ENCODE measurements at regions of chr1 and their contacts with region 1.

Region 1: GRCh38 chr1:241611063-241611462 is 29.1 kb downstream of the CHML start:
- DNase-seq: peak in 1 of 3 donors; percentile 29
- ATAC-seq: peak; percentile 69
- H3K4me3 ChIP-seq: no peak overlapping the region
- H3K4me1 ChIP-seq: peaks cover 22% of the 10 kb centered on the region
- CTCF ChIP-seq: no peak

Region 2: DNA sequence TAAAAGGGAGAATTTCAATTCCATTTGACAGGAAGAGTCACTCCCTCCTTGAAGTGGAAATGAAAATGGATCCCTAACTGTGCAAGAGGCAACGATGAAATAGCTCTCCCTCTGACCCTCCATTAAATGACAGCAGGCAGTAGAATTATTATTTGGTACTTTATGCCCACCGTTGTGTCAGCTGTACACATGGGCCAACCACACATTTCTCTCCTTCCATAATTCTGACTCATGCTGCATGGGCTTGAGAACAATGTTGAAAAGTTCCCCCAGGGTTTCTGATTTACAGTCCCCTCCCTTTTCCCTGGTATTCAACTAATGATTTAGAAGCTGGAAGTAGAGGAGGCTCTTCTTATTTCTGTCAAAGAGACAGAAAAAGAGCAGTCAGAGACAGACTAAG is 357.6 kb before region 1 on chr1:
- intact Hi-C with region 1: no loop called
- DNase-seq: no peak
- ATAC-seq: no peak
- H3K4me3 ChIP-seq: no peak overlapping the region
- H3K4me1 ChIP-seq: no peaks in the 10 kb centered on the region
- CTCF ChIP-seq: no peak

Region 3: DNA sequence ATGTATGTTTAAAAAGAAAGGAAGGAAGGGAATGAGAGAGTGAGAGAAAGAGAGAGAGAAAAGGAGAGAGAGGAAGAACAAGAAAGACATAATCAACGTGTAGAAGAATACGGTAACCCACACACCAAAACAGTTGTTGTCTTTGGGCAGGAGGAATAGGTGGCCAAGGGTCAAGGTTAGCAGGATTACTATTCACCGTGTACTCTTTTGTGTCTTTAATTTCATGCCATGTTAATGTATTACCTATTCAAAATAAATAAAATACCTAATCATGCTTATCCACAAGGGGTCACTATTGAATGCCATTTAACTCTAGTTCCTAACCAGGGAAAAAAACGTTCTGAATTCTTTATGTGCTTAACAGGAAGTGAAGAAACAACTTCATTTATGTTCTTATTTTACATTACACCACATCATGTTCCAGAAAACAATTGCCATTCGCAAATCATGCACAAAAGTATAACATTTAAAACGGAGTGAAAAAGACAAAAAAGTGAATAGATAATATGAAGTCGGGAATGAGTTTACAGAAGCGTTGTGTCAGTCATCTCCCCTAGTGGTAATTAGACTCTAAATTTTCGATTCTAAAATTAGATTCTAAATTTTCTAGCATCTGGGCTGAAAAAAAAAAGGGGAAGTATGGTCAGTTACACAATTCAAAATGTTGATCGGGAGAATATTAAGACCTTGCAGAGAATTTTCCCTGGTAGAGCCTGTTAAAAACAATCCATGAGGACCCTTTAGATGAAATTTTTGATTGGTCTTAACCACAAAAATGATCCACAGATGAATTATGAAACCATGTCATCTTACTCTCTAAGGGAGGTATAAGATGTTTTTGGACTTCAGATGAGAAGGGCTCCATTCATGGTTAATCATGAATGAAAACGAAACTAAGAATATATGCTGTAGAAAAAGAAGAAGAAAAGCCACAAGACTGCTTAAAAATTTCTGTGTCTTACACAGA is 79.6 kb before region 1 on chr1:
- intact Hi-C with region 1: loop called in 1 of 2 experiments (anchors 10 kb)
- DNase-seq: no peak
- ATAC-seq: peak; percentile 88
- H3K4me3 ChIP-seq: no peak overlapping the region
- H3K4me1 ChIP-seq: no peaks in the 10 kb centered on the region
- CTCF ChIP-seq: peak; percentile 27

Region 4: GRCh38 chr1:241834733-241835377 is 223.8 kb after region 1 on chr1:
- intact Hi-C with region 1: loop called in 1 of 2 experiments (anchors 5 kb)
- DNase-seq: no peak
- ATAC-seq: no peak
- H3K4me3 ChIP-seq: no peak overlapping the region
- H3K4me1 ChIP-seq: no peaks in the 10 kb centered on the region
- CTCF ChIP-seq: no peak